ENCODE measurements at regions of chr9 and their contacts with region 1.

Region 1: DNA sequence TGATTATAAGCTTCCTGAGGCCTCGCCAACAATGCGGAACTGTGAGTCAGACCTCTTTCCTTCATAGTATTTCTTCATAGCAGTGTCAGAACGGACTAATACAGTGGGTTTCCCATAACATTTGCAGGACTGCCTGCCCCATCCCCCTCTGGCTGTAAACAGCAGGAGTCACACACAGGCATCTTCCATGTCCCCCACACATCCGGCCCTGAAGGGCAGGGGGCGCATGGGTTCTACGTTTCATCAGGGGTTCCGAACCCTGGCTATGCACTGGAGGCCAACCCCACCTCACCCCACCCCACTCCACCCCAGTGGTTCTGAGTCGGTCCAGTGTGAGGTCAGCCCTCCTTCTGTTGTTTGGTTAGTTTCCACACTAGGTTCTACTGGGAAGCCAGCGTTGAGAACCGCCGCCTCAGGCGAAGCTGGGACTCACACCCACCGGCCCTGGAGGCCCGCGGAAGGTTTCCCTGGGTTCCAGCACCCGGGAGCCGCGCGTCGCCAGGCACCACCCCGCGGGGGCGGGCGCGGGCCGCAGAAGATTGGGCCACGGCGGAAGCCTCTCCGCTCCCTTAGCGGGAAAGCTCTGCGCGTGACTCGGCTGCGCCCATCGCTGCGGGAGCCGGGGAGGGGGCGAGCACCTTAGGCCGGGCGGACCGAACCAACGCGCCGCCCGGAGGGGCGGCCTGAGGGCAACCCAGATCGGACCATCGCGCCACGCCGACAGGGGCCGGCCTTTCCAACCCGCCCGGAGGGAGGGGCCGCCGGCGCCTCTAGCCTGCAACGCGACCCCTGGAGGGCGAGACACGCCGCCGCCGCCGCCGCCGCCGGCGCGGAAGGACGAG is at the start of gene RUSC2:
- DNase-seq: peak; percentile 87 to 92 (median 89)
- H3K4me3 ChIP-seq: peak within 1 kb of the TSS; percentile 56 to 97 (median 93)
- H3K4me3 Mint-ChIP-seq: peak within 1 kb of the TSS; percentile 98 to 99
- H3K27ac ChIP-seq: peak within 1 kb of the TSS; percentile 81 to 92
- H3K27ac Mint-ChIP-seq: peak within 1 kb of the TSS; percentile 91 to 96 (median 92)
- H3K4me1 ChIP-seq: peaks cover 34 to 36% of the 10 kb centered on the region in 2 donors
- H3K4me1 Mint-ChIP-seq: peaks cover 35% of the 10 kb centered on the region
- H3K27me3 ChIP-seq: no peaks in the 10 kb centered on the region
- H3K27me3 Mint-ChIP-seq: peaks cover 2 to 3% (median 2%) of the 10 kb centered on the region in 3 donors
- CTCF ChIP-seq: peak; percentile 52
- polyA plus RNA-seq, gene RUSC2: 2.2 to 18.8 (median 3.7) TPM

Region 2: DNA sequence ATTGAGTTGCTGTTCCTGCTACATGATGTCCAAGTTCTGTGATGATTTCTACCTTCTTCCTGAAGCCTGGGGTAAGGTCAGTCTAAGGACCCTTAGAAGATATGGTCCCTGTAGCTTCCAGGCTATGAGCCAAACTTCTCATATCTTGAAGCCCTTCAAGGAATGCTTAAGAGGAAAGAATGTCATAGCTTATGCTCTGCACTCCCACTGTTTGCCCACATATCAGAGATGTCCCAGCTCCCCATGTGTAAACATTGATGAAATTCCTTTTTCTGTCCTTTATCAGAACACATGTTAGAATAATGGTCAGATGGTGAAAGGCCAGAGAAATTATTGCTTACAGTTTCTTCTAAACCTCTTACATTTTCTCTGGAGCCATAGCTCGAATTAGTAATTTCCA is 41.0 kb before region 1 on chr9:
- intact Hi-C with region 1: no loop called
- DNase-seq: no peak
- H3K4me3 ChIP-seq: no peak overlapping the region
- H3K4me3 Mint-ChIP-seq: no peak overlapping the region
- H3K27ac ChIP-seq: no peak overlapping the region
- H3K27ac Mint-ChIP-seq: no peak overlapping the region
- H3K4me1 ChIP-seq: no peaks in the 10 kb centered on the region
- H3K4me1 Mint-ChIP-seq: no peaks in the 10 kb centered on the region
- H3K27me3 ChIP-seq: peaks cover 0 to 3% of the 10 kb centered on the region in 2 donors
- H3K27me3 Mint-ChIP-seq: peaks cover 5 to 11% (median 6%) of the 10 kb centered on the region in 3 donors
- CTCF ChIP-seq: no peak

Region 3: DNA sequence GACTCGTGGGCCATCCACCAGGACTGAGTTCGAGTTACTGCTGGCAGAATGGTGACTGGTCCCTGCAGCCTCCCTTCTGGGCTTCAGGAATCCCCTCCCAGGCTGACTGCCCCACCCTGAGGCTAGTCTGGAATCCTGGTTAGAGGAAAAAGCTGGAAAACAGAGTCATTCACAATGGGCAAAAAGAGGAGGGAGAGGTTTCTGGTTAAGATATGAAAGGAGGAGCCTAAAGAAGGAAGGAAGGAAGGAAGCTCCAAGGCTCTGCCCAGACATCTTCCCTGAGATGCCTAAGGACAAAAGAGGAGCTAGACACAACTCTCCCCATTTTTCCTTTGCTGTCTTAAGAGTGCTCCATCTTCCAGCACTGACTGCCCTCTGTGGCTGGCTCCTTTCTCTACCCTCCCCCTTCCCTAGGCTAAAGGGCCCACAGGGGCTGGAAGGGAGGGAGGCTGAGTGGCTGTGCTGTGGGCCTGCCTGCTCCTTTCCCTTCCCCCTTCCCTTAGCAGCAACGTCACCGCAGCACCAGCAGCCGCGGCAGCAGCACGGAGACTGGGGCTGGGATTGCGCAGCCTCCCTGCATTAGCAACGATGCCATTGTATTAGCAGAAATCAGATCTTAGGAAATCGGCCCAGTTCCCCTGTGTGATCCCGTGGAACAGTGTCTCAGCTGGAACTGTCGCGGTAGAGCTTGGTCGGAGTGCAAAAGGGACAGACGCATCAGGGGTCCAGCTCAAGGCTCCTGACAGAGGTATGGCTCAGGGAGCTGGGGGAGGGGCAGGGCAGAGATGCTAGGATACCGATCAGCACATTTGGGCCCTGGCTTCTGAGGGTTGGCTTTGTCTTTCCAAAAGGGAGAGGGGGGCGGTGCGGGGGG is 49.1 kb after region 1 on chr9:
- intact Hi-C with region 1: loop called (anchors 5 kb)
- DNase-seq: peak; percentile 90 to 93 (median 91)
- H3K4me3 ChIP-seq: peak overlapping the region; percentile 3 to 64 (median 19)
- H3K4me3 Mint-ChIP-seq: peak overlapping the region; percentile 78 to 92
- H3K27ac ChIP-seq: peak overlapping the region; percentile 84 to 88
- H3K27ac Mint-ChIP-seq: peak overlapping the region; percentile 96 to 99 (median 99)
- H3K4me1 ChIP-seq: peaks cover 65 to 72% of the 10 kb centered on the region in 2 donors
- H3K4me1 Mint-ChIP-seq: peaks cover 73% of the 10 kb centered on the region
- H3K27me3 ChIP-seq: no peaks in the 10 kb centered on the region
- H3K27me3 Mint-ChIP-seq: no peaks in the 10 kb centered on the region
- CTCF ChIP-seq: no peak

Region 4: DNA sequence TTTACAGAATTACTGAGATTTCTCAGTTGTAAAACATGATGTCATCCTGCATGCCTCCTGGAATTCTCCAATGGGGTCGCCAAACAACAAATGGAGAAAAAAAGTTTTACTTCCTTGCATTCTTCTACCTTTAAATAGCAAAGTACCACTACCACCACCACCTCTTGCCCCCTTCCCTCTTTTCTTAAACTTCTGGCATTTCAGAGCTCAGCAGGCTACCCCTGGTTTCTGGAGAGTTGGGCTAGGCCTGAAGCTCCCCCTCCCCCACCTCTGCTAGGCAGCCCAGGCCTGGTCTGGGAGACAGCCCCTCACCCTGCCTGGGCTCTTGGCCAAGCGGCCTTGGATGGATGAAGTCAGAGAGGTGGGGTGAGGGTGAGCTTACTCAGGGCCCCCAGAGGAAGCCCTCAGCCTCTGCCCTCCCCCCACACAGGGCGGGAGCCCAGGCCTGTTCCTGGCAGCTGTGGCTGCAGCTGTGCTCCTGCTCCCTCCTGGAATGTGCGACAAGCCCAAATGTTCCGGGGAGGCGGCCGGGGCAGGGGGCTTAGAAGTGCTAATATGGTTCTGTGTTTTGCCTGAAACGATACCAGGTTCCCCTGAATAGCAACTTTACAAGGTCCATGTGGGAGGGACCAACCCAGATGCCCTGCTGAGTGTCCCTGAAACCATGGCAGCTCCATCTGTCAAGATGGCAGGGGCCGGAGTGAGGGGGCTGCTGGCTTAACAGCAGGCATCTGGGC is 673.7 kb after region 1 on chr9:
- intact Hi-C with region 1: no loop called
- DNase-seq: no peak
- H3K4me3 ChIP-seq: no peak overlapping the region
- H3K4me3 Mint-ChIP-seq: no peak overlapping the region
- H3K27ac ChIP-seq: no peak overlapping the region
- H3K27ac Mint-ChIP-seq: peak overlapping the region in 3 of 7 donors; percentile 23 to 65 (median 45)
- H3K4me1 ChIP-seq: peaks cover 24 to 38% of the 10 kb centered on the region in 2 donors
- H3K4me1 Mint-ChIP-seq: peaks cover 35% of the 10 kb centered on the region
- H3K27me3 ChIP-seq: no peaks in the 10 kb centered on the region
- H3K27me3 Mint-ChIP-seq: peaks cover 1 to 4% (median 3%) of the 10 kb centered on the region in 3 donors
- CTCF ChIP-seq: no peak